ENCODE measurements at regions of chr5 and their contacts with region 1.

Region 1: GRCh38 chr5:174724491-174725260 is at the start of gene MSX2:
- DNase-seq: peak; percentile 70
- ATAC-seq: peak; percentile 85
- H3K4me3 Mint-ChIP-seq: peak within 1 kb of the TSS; percentile 64
- H3K27ac Mint-ChIP-seq: no peak within 1 kb of the TSS
- H3K4me1 Mint-ChIP-seq: peaks cover 12% of the 10 kb centered on the region
- H3K27me3 Mint-ChIP-seq: peaks cover 79% of the 10 kb centered on the region
- total RNA-seq, gene MSX2: not detected

Region 2: DNA sequence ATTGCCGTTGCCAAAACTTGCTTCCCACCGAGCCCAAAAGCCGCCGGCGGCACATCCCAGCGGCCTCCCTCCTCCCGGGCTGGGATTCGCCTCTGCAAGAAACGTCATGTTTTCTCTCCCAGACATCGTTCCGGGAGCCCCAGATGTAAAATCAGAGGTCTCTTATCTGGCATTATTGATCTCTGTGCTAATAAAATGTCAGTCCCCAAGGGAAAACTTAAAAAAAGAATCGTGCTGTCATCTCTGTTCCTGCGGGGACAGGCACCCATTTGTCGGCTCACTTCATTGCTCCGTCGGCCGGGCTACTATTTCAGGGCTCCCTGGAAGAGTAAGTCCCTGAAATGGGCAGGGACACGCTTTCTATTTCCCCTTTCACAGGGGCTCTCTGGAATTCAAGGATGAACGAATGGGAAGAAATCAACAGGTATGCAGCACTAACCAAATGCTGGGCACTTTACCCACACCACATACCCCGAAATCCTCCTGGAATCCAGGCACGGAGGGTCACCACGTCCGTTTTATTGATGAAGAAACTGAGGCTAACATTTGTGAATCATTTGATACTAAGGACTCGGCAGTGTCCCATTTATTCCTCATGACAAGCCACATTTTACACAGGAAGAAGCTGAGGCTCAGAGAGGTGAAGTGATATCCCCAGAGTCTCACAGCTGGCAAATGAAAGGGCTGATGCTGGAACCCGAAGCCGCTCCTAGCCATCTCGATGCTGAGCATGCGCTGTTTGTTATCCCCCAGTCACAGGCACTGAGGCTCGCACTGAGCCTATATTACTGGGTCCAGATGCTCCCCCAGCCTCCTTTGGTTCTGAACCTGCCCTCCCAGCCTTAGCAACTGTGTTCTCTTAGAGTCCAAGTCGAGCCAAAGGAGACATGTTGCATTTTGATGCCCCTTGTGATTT is 36.0 kb before region 1 on chr5:
- CTCF ChIA-PET with region 1: no interaction called
- POLR2A ChIA-PET with region 1: no interaction called
- intact Hi-C with region 1: loop called in 1 of 2 experiments (anchors 2 kb)
- DNase-seq: no peak
- ATAC-seq: no peak
- H3K4me3 Mint-ChIP-seq: no peak overlapping the region
- H3K27ac Mint-ChIP-seq: no peak overlapping the region
- H3K4me1 Mint-ChIP-seq: peaks cover 4% of the 10 kb centered on the region
- H3K27me3 Mint-ChIP-seq: peaks cover 59% of the 10 kb centered on the region

Region 3: GRCh38 chr5:174735498-174736330 is 11.0 kb after region 1 on chr5:
- CTCF ChIA-PET with region 1: no interaction called
- POLR2A ChIA-PET with region 1: no interaction called
- intact Hi-C with region 1: loop called in 1 of 2 experiments (anchors 2 kb)
- DNase-seq: peak; percentile 42
- ATAC-seq: no peak
- H3K4me3 Mint-ChIP-seq: no peak overlapping the region
- H3K27ac Mint-ChIP-seq: no peak overlapping the region
- H3K4me1 Mint-ChIP-seq: peaks cover 4% of the 10 kb centered on the region
- H3K27me3 Mint-ChIP-seq: peaks cover 72% of the 10 kb centered on the region